ENCODE measurements at regions of chr19 and their contacts with region 1.

Region 1: GRCh38 chr19:39038098-39038497 is 5.7 kb upstream of the FBXO27 start:
- DNase-seq: peak; percentile 50 to 71 (median 63)
- ATAC-seq: peak; percentile 91 to 97 (median 94)
- H3K4me3 ChIP-seq: no peak overlapping the region
- H3K27ac ChIP-seq: no peak overlapping the region
- H3K4me1 ChIP-seq: peaks cover 0 to under 1% (median 0%) of the 10 kb centered on the region in 4 donors
- H3K27me3 ChIP-seq: no peaks in the 10 kb centered on the region
- CTCF ChIP-seq: peak; percentile 30 to 52 (median 42)
- POLR2A ChIP-seq: no peak

Region 2: DNA sequence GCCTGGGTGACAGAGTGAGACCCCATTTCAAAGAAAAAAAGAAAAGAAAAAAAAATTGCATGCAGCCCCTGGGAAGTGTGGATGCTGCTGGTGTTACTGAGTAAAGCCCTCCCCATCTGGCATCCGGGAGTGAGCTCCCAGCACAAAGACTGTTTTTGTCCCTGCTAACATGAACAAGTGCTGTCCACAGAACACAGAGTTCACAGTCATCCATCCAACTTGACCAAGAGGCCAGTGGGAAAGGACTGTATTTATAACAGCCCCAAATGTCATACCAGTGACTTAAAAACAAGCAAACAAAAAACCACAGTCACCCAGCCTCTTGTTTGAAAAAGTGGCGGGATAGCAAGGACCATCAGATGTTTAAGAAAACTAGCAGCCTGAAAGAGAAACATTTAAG is 73.4 kb before region 1 on chr19:
- intact Hi-C with region 1: loop called in 1 of 2 experiments (anchors 5 kb)
- DNase-seq: no peak
- ATAC-seq: no peak
- H3K4me3 ChIP-seq: no peak overlapping the region
- H3K27ac ChIP-seq: no peak overlapping the region
- H3K4me1 ChIP-seq: no peaks in the 10 kb centered on the region
- H3K27me3 ChIP-seq: no peaks in the 10 kb centered on the region
- CTCF ChIP-seq: no peak
- POLR2A ChIP-seq: no peak